ENCODE measurements at regions of chr14 and their contacts with region 1.

Region 1: GRCh38 chr14:100994756-100995309 is 91.3 kb upstream of the RTL1 start:
- DNase-seq: no peak
- H3K4me3 ChIP-seq: no peak overlapping the region
- CTCF ChIP-seq: no peak
- POLR2A ChIP-seq: no peak

Region 2: DNA sequence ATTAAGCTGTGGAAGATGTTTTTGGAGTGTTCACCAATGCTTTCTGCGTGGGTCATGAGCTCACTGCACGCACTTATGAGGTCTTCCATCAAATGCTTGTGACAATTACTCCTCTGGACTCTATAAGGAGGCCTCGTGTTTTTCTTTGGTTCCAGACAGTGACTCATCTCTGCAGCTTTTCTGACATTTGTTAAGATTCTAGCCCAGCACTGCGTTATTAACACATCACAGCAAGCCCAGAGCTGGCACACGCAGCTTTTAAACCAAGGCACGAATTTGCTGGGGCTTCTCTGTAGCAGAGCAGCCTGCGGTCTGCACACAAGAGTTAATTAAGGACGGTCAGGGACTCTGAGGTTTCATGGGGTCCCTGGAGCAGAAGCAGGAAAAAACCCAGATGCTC is 152.0 kb before region 1 on chr14:
- intact Hi-C with region 1: no loop called
- DNase-seq: peak in 1 of 2 donors; percentile 19
- H3K4me3 ChIP-seq: no peak overlapping the region
- CTCF ChIP-seq: no peak
- POLR2A ChIP-seq: no peak

Region 3: GRCh38 chr14:101004954-101005353 is 10.1 kb after region 1 on chr14:
- intact Hi-C with region 1: no loop called
- DNase-seq: peak in 1 of 2 donors; percentile 59
- H3K4me3 ChIP-seq: no peak overlapping the region
- CTCF ChIP-seq: no peak
- POLR2A ChIP-seq: no peak

Region 4: DNA sequence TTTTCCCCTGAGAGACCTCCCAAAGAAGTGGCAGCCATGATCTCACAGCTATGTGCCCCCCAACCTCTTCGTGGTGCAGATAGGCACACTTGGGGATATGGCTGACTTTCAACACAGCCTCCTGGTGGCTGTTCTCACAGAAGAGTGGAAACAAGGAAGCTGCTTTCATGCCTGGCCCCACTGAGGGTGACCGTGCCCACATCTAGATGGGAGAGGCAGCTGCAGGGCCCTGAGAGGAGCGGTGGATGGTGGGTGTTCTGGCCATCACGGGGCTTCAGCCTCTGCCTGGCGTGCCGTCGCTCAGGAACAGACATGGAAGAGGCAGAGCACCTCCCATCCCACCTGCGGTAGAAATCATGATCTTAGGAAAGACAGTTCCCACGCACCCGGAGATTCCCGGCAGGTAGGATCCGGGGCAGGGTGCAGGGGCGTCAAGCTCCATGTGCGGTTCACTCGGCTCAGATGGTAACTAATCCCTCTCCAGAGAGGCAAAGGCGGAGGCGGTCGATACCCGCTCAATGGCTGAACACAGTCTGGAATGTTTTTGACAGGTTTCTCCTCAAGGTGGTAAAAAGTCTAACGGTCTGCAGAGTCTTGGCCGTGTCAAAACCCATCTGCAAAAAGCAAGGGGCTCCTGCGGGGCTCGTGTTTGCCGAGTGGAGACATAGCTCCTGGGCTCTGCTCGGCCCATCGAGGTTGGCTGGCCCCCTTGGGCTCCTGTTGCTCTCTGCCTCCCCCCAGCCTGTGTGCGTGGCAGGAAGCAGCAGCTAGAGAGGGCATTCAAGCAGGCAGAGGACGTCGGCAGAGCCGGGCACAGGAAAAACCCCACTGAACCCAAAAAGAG is 133.9 kb after region 1 on chr14:
- intact Hi-C with region 1: loop called (anchors 5 kb)
- DNase-seq: peak in 1 of 2 donors; percentile 77
- H3K4me3 ChIP-seq: no peak overlapping the region
- CTCF ChIP-seq: no peak
- POLR2A ChIP-seq: no peak

Measured in lower leg skin (tissue), 4 donors.